ENCODE measurements at regions of chr6 and their contacts with region 1.

Region 1: DNA sequence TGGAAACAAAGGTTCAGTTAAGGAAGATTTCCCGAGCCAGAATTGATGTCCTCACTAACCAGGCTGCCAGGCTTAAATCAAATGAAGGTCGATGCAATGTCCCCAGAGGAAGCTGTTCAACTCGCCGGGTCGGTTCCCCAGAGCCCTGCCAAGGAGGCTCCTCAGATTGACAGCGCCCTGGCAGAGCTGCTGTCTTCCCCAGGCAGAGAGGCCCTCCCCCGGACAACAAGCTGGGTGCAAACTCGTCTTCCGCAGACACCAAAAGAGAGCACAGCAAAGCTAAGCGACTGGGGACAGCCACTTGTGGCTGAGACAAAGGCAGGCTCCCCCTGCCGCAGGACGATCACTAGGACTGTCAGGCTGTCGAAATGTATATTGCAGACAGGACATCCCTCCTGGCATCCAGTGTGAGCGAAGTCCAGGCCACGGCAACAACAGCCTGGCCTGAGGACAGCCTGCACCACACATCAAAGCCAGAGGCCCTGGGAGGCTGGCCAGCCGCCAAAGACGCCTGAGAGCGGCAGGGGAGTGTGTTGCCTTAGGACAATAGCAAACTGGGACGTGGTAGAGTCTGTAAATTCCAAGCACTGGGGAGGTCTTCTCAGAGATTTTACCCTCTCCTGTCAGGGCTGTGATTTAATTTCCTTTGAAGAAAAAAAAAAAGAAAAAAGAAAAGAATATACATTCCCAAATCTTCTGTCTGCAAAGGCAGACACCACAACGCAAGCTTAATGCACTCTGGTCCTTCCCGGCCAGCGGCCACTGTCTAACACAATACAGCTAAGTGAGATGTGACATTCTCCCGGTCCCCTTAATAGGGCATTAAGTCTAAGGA is 99.1 kb downstream of the HIVEP2 start:
- DNase-seq: peak; percentile 48
- H3K4me3 Mint-ChIP-seq: peak overlapping the region; percentile 81
- H3K27ac Mint-ChIP-seq: peak overlapping the region; percentile 91
- H3K4me1 Mint-ChIP-seq: peaks cover 91% of the 10 kb centered on the region
- H3K27me3 Mint-ChIP-seq: no peaks in the 10 kb centered on the region

Region 2: DNA sequence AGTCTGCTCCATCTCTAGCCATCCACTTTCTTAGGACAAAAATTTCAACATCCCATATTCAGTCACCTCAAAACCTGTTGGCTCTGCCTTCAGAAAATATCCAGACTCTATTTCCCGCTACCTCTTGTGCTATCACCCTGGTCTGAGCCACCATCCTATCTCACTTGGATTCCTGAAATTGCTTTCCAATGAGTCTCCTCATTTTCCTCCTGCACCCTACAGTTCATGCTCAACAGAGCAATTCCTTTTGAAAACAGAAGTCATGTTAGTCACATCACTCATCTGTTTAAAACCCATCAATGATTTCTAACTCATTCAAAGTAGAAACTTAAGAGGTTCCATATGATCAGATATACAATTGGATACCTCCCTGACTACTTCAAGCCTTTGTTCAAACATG is 314.1 kb before region 1 on chr6:
- intact Hi-C with region 1: no loop called
- DNase-seq: no peak
- H3K4me3 Mint-ChIP-seq: no peak overlapping the region
- H3K27ac Mint-ChIP-seq: no peak overlapping the region
- H3K4me1 Mint-ChIP-seq: no peaks in the 10 kb centered on the region
- H3K27me3 Mint-ChIP-seq: no peaks in the 10 kb centered on the region

Region 3: GRCh38 chr6:142566628-142567396 is 279.0 kb before region 1 on chr6:
- intact Hi-C with region 1: loop called (anchors 5 kb)
- DNase-seq: peak; percentile 38
- H3K4me3 Mint-ChIP-seq: no peak overlapping the region
- H3K27ac Mint-ChIP-seq: no peak overlapping the region
- H3K4me1 Mint-ChIP-seq: peaks cover 48% of the 10 kb centered on the region
- H3K27me3 Mint-ChIP-seq: no peaks in the 10 kb centered on the region

Region 4: GRCh38 chr6:142810952-142811514 is 34.8 kb before region 1 on chr6:
- intact Hi-C with region 1: loop called (anchors 1 kb)
- DNase-seq: peak; percentile 15
- H3K4me3 Mint-ChIP-seq: peak overlapping the region; percentile 3
- H3K27ac Mint-ChIP-seq: peak overlapping the region; percentile 77
- H3K4me1 Mint-ChIP-seq: peaks cover 56% of the 10 kb centered on the region
- H3K27me3 Mint-ChIP-seq: no peaks in the 10 kb centered on the region

Region 5: GRCh38 chr6:142871910-142872331 is 26.1 kb after region 1 on chr6:
- intact Hi-C with region 1: loop called (anchors 1 kb)
- DNase-seq: peak; percentile 55
- H3K4me3 Mint-ChIP-seq: peak overlapping the region; percentile 40
- H3K27ac Mint-ChIP-seq: peak overlapping the region; percentile 78
- H3K4me1 Mint-ChIP-seq: peaks cover 86% of the 10 kb centered on the region
- H3K27me3 Mint-ChIP-seq: no peaks in the 10 kb centered on the region

Region 6: DNA sequence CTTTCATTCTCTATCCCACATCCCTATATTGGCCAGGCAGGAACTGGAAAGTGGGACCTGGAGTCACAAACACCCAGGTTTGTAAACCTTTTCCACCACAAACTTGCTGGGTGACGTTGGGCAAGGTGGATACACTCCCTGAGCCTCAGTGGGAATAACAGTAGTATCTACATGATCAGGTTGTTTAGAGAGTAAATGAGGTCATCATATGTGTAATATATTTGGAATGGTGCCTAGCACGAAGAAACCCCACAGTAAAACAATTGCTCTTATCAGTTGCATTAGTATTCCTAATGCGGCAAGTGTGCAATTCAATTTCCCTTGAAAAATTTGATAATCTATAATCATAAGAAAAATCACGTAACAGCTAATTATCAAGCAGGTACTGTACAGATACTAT is 47.2 kb after region 1 on chr6:
- intact Hi-C with region 1: no loop called
- DNase-seq: no peak
- H3K4me3 Mint-ChIP-seq: no peak overlapping the region
- H3K27ac Mint-ChIP-seq: no peak overlapping the region
- H3K4me1 Mint-ChIP-seq: peaks cover 36% of the 10 kb centered on the region
- H3K27me3 Mint-ChIP-seq: no peaks in the 10 kb centered on the region

Region 7: DNA sequence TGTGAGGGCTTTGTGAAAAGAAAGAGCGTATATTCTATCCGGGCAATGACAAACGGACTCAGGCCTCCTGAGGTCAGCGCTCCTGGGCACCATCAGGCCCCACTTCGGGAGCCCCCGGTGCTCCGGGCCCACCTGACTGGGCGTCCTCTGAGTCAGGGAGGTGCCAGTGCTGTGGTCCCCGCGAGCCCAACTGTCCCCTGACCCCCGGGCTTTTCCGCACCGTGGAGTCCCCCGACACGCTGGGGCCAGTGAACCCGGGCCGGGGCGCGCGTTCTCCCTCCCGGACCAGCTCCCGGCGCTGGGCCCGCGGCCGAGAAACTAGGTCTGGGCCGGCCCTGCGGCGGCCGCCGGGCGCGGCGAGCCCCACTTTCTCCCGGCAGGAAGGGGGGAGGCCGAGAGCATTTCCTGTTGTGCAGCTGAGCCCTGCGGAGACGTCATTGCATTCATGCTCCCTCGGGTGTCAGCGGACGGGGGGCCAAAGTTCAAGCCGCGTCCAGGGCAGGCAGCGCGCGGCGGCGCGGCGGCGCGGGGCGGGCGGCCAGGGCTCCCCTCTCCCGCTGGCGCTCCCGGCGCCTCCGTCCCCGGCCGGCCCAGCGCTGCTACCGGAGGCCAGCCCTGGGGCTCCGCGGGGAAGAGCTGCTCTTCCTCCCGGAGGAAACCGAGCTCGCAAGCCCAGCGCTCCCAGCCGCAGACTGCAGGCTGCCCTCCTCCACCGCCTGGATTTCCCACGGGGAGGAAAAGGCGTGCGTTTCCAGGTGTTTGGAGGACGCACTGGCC is 80.8 kb after region 1 on chr6:
- intact Hi-C with region 1: loop called (anchors 1 kb)
- DNase-seq: peak; percentile 76
- H3K4me3 Mint-ChIP-seq: peak overlapping the region; percentile 90
- H3K27ac Mint-ChIP-seq: peak overlapping the region; percentile 96
- H3K4me1 Mint-ChIP-seq: peaks cover 62% of the 10 kb centered on the region
- H3K27me3 Mint-ChIP-seq: no peaks in the 10 kb centered on the region

Region 8: DNA sequence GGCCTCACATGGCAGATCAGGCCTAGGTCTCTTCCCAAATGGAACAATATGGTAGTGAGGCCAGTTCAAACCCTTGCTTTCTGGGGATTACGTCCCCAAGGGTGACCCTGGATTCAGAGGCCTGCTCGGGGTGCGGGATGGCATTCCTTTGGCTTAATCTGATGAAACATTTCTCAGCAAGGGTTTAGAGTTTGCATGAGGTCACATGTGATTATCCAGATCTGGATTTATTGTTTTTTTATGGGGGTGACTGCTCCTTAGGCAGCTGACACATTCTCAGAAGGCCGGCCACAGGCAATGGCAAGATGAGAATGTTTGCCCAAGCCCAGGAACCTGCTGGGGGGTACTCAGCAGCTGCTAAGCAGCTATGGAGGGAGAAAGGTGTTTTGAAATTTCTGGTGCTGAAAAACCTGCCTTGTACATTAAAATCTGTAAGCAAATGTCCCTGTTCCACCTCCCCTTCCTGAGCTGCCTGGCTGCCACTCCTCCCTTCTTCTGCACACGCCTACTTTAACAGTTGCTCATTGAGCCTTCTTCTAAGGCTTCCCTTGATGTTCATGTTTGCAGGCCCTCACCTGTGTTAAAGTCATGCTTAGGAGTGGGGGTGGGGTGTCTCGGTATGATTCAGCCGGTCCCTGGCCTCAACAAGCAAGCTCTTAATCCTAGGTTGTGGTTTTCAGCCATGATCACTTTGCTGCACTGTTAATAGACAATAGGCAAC is 703.5 kb after region 1 on chr6:
- intact Hi-C with region 1: loop called (anchors 10 kb)
- DNase-seq: no peak
- H3K4me3 Mint-ChIP-seq: peak overlapping the region; percentile 40
- H3K27ac Mint-ChIP-seq: peak overlapping the region; percentile 74
- H3K4me1 Mint-ChIP-seq: peaks cover 88% of the 10 kb centered on the region
- H3K27me3 Mint-ChIP-seq: no peaks in the 10 kb centered on the region